Mammary epithelial cell (primary cell): ENCODE measurements at regions of chr10 and their contacts with region 1.

Region 1: GRCh38 chr10:43138021-43138756 is at the start of gene CSGALNACT2:
- DNase-seq: peak; percentile 85
- H3K4me3 ChIP-seq: peak within 1 kb of the TSS; percentile 70 to 86 (median 86)
- H3K27ac ChIP-seq: peak within 1 kb of the TSS; percentile 58
- H3K4me1 ChIP-seq: peaks cover 14% of the 10 kb centered on the region
- H3K27me3 ChIP-seq: no peaks in the 10 kb centered on the region
- CTCF ChIP-seq: no peak
- total RNA-seq, gene CSGALNACT2: 13.8 to 24.5 TPM

Region 2: GRCh38 chr10:43078987-43079275 is 59.3 kb before region 1 on chr10:
- CTCF ChIA-PET with region 1: no interaction called
- dilution Hi-C with region 1: no loop called
- in situ Hi-C with region 1: no loop called
- intact Hi-C with region 1: no loop called
- DNase-seq: no peak
- H3K4me3 ChIP-seq: no peak overlapping the region
- H3K27ac ChIP-seq: no peak overlapping the region
- H3K4me1 ChIP-seq: peaks cover 4% of the 10 kb centered on the region
- H3K27me3 ChIP-seq: peaks cover 8% of the 10 kb centered on the region
- CTCF ChIP-seq: peak; percentile 36 to 65

Region 3: DNA sequence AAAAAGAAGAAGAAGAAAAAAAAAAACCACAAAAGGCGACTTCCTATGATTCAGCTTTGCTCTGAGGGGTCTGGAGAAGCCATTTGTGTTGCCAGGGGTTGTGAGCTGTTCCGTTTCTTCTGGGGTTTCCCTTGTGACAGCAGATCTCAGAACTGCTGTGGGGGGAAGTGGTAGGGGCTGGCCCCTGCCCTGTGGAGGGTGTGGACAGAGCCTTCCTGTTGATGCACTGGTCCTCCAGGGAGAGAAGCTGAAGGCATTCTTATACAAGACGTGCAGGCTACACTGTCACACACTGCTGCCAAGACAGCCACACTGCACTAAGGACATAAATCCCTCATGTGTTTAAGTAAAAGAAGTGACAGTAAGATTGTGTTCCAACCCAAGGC is 17.3 kb before region 1 on chr10:
- CTCF ChIA-PET with region 1: no interaction called
- dilution Hi-C with region 1: no loop called
- in situ Hi-C with region 1: no loop called
- intact Hi-C with region 1: no loop called
- DNase-seq: no peak
- H3K4me3 ChIP-seq: no peak overlapping the region
- H3K27ac ChIP-seq: no peak overlapping the region
- H3K4me1 ChIP-seq: no peaks in the 10 kb centered on the region
- H3K27me3 ChIP-seq: no peaks in the 10 kb centered on the region
- CTCF ChIP-seq: no peak

Region 4: GRCh38 chr10:43160046-43160918 is 22.1 kb after region 1 on chr10:
- CTCF ChIA-PET with region 1: no interaction called
- dilution Hi-C with region 1: no loop called
- in situ Hi-C with region 1: no loop called
- intact Hi-C with region 1: loop called (anchors 1 kb)
- DNase-seq: peak; percentile 76
- H3K4me3 ChIP-seq: no peak overlapping the region
- H3K27ac ChIP-seq: peak overlapping the region; percentile 78
- H3K4me1 ChIP-seq: peaks cover 20% of the 10 kb centered on the region
- H3K27me3 ChIP-seq: no peaks in the 10 kb centered on the region
- CTCF ChIP-seq: no peak

Region 5: GRCh38 chr10:43653746-43654145 is 515.6 kb after region 1 on chr10:
- CTCF ChIA-PET with region 1: no interaction called
- dilution Hi-C with region 1: no loop called
- in situ Hi-C with region 1: no loop called
- intact Hi-C with region 1: no loop called
- DNase-seq: no peak
- H3K4me3 ChIP-seq: no peak overlapping the region
- H3K27ac ChIP-seq: no peak overlapping the region
- H3K4me1 ChIP-seq: peaks cover 2% of the 10 kb centered on the region
- H3K27me3 ChIP-seq: no peaks in the 10 kb centered on the region
- CTCF ChIP-seq: no peak